ENCODE measurements at regions of chrX and their contacts with region 1.

Region 1: GRCh38 chrX:40772290-40772689 is 36.9 kb upstream of the MED14 start:
- DNase-seq: peak in 1 of 2 experiments; percentile 54
- H3K4me3 ChIP-seq: no peak overlapping the region
- H3K27ac ChIP-seq: no peak overlapping the region
- H3K4me1 ChIP-seq: no peaks in the 10 kb centered on the region; the same call in 1 of the 2 replicates
- H3K27me3 ChIP-seq: no peaks in the 10 kb centered on the region
- CTCF ChIP-seq: no peak

Region 2: GRCh38 chrX:40671126-40671525 is 101.2 kb before region 1 on chrX:
- CTCF ChIA-PET with region 1: no interaction called
- POLR2A ChIA-PET with region 1: no interaction called
- intact Hi-C with region 1: no loop called
- DNase-seq: no peak
- H3K4me3 ChIP-seq: no peak overlapping the region
- H3K27ac ChIP-seq: no peak overlapping the region
- H3K4me1 ChIP-seq: no peaks in the 10 kb centered on the region
- H3K27me3 ChIP-seq: no peaks in the 10 kb centered on the region
- CTCF ChIP-seq: no peak

Region 3: GRCh38 chrX:41312786-41313185 is 540.5 kb after region 1 on chrX:
- CTCF ChIA-PET with region 1: no interaction called
- POLR2A ChIA-PET with region 1: interaction called, 21 read pairs
- intact Hi-C with region 1: no loop called
- DNase-seq: no peak
- H3K4me3 ChIP-seq: no peak overlapping the region
- H3K27ac ChIP-seq: no peak overlapping the region
- H3K4me1 ChIP-seq: no peaks in the 10 kb centered on the region
- H3K27me3 ChIP-seq: no peaks in the 10 kb centered on the region
- CTCF ChIP-seq: no peak

Measured in PC-9 (cell line).